ENCODE measurements at regions of chr1 and their contacts with region 1.

Region 1: GRCh38 chr1:235971571-235972310 is 93.1 kb downstream of the NID1 start:
- DNase-seq: peak; percentile 85
- H3K4me3 ChIP-seq: peak overlapping the region; percentile 47
- H3K27ac ChIP-seq: peak overlapping the region; percentile 98
- H3K27me3 ChIP-seq: no peaks in the 10 kb centered on the region
- CTCF ChIP-seq: peak; percentile 89

Region 2: GRCh38 chr1:235597867-235598553 is 373.7 kb before region 1 on chr1:
- CTCF ChIA-PET with region 1: interaction called, 15 read pairs
- POLR2A ChIA-PET with region 1: no interaction called
- DNase-seq: peak; percentile 10
- H3K4me3 ChIP-seq: no peak overlapping the region
- H3K27ac ChIP-seq: no peak overlapping the region
- H3K27me3 ChIP-seq: no peaks in the 10 kb centered on the region
- CTCF ChIP-seq: peak; percentile 54

Region 3: DNA sequence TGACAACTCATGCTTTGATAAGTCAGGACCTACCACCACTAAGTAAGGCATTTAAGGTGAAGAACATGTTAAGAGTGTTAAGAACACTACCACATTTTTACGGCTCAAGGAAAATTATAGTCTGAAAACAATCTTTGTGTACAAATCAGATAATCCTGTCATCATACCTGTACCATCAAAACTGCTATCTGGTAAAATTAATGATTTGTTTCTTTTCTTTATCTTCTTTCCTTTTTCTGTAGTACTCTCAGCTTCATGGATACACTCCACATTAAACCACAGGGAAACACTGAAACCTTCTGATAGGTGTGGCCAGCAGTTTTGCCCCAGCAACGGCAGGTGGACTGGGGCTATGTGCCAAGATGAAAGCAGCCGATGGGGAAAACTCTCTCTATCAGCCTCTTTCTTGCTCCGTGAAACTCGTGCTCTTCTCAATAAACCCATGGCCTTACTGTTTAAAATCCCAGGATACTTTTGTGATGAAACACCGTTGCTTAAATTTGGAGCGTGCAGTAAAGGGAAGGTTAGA is 180.1 kb before region 1 on chr1:
- CTCF ChIA-PET with region 1: interaction called, 25 read pairs
- POLR2A ChIA-PET with region 1: no interaction called
- DNase-seq: no peak
- H3K4me3 ChIP-seq: no peak overlapping the region
- H3K27ac ChIP-seq: no peak overlapping the region
- H3K27me3 ChIP-seq: no peaks in the 10 kb centered on the region
- CTCF ChIP-seq: no peak

Region 4: GRCh38 chr1:235843461-235843961 is 128.2 kb before region 1 on chr1:
- CTCF ChIA-PET with region 1: interaction called, 50 read pairs
- POLR2A ChIA-PET with region 1: no interaction called
- DNase-seq: no peak
- H3K4me3 ChIP-seq: no peak overlapping the region
- H3K27ac ChIP-seq: no peak overlapping the region
- H3K27me3 ChIP-seq: no peaks in the 10 kb centered on the region
- CTCF ChIP-seq: peak; percentile 75

Region 5: GRCh38 chr1:235902638-235903542 is 68.9 kb before region 1 on chr1:
- CTCF ChIA-PET with region 1: interaction called, 14 read pairs
- POLR2A ChIA-PET with region 1: no interaction called
- DNase-seq: no peak
- H3K4me3 ChIP-seq: no peak overlapping the region
- H3K27ac ChIP-seq: no peak overlapping the region
- H3K27me3 ChIP-seq: no peaks in the 10 kb centered on the region
- CTCF ChIP-seq: no peak

Region 6: GRCh38 chr1:235947989-235948388 is 23.8 kb before region 1 on chr1:
- CTCF ChIA-PET with region 1: interaction called, 24 read pairs
- POLR2A ChIA-PET with region 1: interaction called, 4 read pairs
- DNase-seq: no peak
- H3K4me3 ChIP-seq: no peak overlapping the region
- H3K27ac ChIP-seq: no peak overlapping the region
- H3K27me3 ChIP-seq: no peaks in the 10 kb centered on the region
- CTCF ChIP-seq: no peak

Region 7: DNA sequence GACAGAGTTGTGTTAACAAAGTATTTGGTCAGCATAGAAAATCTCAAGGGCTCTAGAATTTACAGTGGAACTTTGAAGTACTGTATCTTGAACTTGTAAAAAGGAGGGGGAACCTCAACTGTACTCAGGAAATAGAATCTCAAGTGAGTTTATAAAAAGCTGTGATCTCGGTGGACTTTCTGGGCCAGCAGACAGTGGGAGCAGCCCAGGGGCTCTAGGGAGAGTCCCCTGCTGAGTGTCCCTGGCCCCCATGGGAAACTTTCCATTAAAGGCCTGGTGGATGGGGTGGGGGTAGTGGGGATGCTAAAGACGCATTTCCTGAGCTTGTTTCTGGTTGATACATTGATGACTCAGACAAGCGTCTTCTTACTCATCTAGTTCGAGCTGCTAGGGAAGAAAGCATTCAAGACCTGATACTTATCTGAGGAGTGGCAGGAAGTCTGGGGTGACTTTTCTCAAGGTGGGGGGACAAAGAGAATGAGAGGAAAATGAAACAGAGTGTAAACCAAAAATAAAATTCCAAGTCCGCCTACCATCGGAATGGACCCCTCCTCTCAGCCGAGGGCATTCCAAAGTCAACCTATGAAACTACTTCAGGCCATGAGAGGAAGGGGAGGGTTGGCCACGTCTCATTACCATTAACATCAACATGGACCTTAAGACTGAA is 27.7 kb after region 1 on chr1:
- CTCF ChIA-PET with region 1: interaction called, 23 read pairs
- POLR2A ChIA-PET with region 1: no interaction called
- DNase-seq: peak; percentile 74
- H3K4me3 ChIP-seq: no peak overlapping the region
- H3K27ac ChIP-seq: peak overlapping the region; percentile 90
- H3K27me3 ChIP-seq: no peaks in the 10 kb centered on the region
- CTCF ChIP-seq: no peak